Thyroid gland (tissue), 4 donors: ENCODE measurements at regions of chr7 and their contacts with region 1.

Region 1: DNA sequence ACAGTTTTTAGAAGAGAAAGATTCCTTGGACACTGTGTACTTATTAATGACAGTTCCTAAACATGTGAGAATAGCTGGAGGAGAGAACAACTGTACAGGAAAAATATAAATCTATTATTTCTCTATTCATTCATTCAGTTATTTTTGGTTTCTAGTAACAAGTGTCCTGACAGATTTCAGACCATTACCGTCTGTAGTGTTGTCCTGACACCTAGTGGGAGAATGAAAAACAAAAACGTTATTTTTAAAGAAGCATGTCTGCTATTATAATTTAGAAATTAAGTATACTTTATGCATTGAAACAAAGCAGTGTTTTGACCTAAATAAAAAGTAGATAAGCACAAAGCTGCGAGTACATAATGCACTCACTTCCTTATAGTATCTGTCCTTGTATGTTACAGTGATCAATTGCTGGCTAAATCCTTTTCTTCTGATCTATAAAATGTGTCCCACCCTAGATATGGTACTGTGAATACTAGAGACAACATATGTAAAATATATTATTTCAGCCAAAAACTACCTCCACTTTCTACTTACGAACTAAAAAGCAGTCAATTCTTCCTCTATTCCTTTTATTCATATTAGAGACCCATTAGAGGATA is 575.6 kb downstream of the ARL4A start:
- DNase-seq: no peak
- H3K4me3 ChIP-seq: no peak overlapping the region
- H3K27ac ChIP-seq: no peak overlapping the region
- H3K4me1 ChIP-seq: no peaks in the 10 kb centered on the region
- H3K27me3 ChIP-seq: no peaks in the 10 kb centered on the region
- CTCF ChIP-seq: peak in 5 of 6 experiments; percentile 21 to 78 (median 58)
- POLR2A ChIP-seq: no peak

Region 2: DNA sequence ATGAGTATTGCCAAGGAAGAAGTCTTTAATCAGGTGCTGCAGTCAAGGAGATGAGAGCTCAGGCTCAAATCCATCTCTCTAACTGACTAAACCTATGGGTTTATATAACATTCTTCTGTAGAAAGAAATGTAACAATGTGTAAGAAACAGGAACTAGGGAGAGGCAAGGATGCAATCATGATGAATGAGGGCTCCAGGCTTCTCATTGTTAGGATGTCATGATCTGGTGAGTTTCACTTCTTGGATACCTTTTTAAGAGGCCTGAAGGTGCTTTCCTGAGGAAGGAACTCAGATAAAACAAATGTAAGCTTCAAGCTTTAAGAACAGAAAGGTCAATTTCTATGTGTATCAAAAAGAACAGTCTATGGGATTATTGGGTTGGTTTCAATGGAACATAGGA is 723.3 kb before region 1 on chr7:
- intact Hi-C with region 1: loop called (anchors 10 kb)
- DNase-seq: no peak
- H3K4me3 ChIP-seq: no peak overlapping the region
- H3K27ac ChIP-seq: no peak overlapping the region
- H3K4me1 ChIP-seq: no peaks in the 10 kb centered on the region
- H3K27me3 ChIP-seq: no peaks in the 10 kb centered on the region
- CTCF ChIP-seq: no peak
- POLR2A ChIP-seq: no peak

Region 3: GRCh38 chr7:12638851-12639467 is 624.1 kb before region 1 on chr7:
- intact Hi-C with region 1: loop called (anchors 5 kb)
- DNase-seq: no peak
- H3K4me3 ChIP-seq: no peak overlapping the region
- H3K27ac ChIP-seq: no peak overlapping the region
- H3K4me1 ChIP-seq: peaks cover 0 to 2% of the 10 kb centered on the region in 2 donors
- H3K27me3 ChIP-seq: no peaks in the 10 kb centered on the region
- CTCF ChIP-seq: peak; percentile 19 to 74 (median 66)
- POLR2A ChIP-seq: no peak

Region 4: DNA sequence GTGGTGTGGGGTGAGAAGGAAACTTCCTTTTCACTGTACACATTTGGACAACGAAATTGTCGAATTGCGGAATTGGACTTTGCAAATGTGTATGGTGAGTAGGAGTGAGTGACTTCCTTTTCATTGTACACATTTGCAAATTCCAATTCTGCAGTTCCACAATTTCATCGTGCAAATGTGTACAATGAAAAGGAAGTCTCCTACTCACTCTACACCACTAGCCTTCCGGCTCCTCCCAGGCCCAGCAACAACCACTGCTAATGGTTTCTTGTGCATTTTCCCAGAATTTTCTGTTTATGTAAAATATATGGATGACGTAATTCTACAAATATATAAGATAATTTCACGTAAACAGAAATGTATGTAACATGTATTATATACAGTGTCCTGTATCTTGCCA is 457.1 kb before region 1 on chr7:
- intact Hi-C with region 1: no loop called
- DNase-seq: no peak
- H3K4me3 ChIP-seq: no peak overlapping the region
- H3K27ac ChIP-seq: no peak overlapping the region
- H3K4me1 ChIP-seq: no peaks in the 10 kb centered on the region
- H3K27me3 ChIP-seq: no peaks in the 10 kb centered on the region
- CTCF ChIP-seq: no peak
- POLR2A ChIP-seq: no peak